OCI-LY7 (cell line): ENCODE measurements at regions of chr4 and their contacts with region 1.

Region 1: DNA sequence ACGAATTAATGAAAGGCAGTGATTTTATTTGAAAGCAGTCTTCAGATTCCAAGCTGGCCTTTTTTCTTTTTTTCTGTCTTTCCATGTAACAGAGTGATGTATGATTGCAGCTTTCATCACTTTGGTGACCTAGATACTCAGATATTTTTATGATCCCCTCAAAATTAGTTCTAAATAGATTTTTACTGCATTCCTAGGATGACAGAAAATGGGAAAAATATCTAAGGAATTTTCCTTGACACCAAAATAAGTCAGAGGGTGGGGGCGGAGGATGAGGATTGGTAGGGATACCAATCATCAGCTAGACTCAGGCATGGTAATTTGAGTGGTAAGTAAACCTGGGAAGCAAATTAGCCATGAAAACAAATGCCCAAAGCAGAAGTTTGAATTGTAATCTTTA is 11.9 kb upstream of the HMGB2 start:
- DNase-seq: no peak
- H3K4me3 ChIP-seq: no peak overlapping the region
- H3K27ac ChIP-seq: no peak overlapping the region
- H3K4me1 ChIP-seq: peaks cover 5% of the 10 kb centered on the region
- CTCF ChIP-seq: no peak

Region 2: DNA sequence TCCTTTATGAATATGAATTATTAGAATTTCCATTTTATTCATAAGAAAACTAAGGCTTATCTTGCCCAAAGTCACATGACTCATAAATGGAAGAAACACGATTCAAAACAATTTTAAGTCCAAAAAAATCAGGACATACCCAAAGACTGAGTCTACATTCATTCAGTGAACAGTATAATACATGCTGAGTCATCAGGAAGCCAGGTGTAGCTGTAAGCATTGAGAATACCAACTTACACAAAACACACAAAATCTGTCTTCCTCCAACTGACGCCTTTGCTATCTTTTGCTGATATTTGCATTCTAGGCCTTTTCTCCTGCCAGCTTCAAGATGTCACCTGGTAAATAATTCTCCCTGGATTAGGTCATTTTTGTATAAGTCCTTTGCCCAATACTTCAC is 697.6 kb before region 1 on chr4:
- CTCF ChIA-PET with region 1: no interaction called
- POLR2A ChIA-PET with region 1: no interaction called
- intact Hi-C with region 1: no loop called
- DNase-seq: no peak
- H3K4me3 ChIP-seq: no peak overlapping the region
- H3K27ac ChIP-seq: no peak overlapping the region
- H3K4me1 ChIP-seq: no peaks in the 10 kb centered on the region
- CTCF ChIP-seq: no peak

Region 3: DNA sequence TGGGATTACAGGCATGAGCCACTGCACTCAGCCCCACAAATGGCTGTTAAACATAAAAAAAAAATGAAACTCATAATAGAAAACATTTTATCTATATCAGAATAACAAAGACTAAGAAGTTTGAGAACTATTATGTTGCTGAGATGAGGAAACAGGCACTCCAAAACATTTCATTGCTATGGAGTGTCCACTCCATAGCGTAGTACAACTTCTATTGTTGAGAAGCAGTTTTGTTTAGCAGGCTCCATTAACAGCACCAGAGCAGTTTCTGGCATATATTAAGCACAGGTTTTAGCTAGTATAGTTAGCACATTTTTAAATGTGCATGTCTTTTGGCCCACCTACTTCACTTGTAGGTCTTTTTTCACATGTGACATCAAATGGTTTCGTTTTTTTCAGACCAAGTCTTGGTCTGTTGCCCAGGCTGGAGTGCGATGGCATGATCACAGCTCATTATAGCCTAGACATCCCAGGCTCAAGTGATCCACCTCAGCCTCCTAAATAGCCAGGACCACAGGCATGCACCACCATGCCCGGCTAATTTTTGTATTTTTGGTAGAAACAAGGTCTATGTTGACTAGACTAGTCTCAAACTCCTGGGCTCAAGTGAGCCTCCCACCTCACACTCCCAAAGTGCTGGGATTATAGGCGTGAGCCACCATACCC is 17.7 kb before region 1 on chr4:
- CTCF ChIA-PET with region 1: no interaction called
- POLR2A ChIA-PET with region 1: interaction called, 54 read pairs
- intact Hi-C with region 1: no loop called
- DNase-seq: no peak
- H3K4me3 ChIP-seq: no peak overlapping the region
- H3K27ac ChIP-seq: no peak overlapping the region
- H3K4me1 ChIP-seq: peaks cover 26% of the 10 kb centered on the region
- CTCF ChIP-seq: no peak

Region 4: DNA sequence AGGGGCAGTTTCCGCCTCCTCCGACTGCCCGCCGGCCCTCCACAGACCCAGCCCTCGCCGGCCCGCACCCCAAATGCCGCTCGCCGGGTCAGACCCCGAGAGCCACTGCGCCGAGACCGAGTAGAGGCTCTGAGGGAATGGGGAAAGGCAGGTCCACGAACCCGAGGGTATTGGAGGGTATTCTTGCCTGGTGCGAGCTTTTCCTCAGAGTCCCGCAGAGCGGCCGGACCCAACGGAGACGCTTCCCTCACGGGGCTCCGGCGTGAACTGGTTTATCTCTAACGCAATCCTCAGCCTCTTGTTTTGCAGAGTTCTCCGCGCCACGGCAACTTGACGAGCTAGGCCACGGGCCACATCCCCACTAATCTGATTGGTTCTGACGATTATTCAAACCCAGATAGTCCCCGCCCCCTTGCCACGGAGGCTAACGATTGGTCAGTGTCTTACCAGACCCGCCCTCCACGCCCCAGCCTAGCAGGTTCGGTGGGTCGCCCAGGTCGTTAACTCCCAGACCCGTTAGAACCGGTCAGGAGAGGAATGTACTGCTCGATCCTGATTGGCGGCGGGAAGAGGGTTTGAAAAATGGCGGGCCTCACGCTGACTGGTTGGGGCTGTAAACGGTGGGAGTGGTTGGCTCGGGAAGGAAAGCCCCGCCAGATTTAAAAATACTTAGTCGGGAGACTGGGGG is 11.8 kb before region 1 on chr4 and contains the start of gene HMGB2:
- CTCF ChIA-PET with region 1: interaction called, 3 read pairs
- POLR2A ChIA-PET with region 1: interaction called, 54 read pairs
- intact Hi-C with region 1: no loop called
- DNase-seq: peak; percentile 100
- H3K4me3 ChIP-seq: peak within 1 kb of the TSS; percentile 99
- H3K27ac ChIP-seq: peak within 1 kb of the TSS; percentile 92
- H3K4me1 ChIP-seq: peaks cover 49% of the 10 kb centered on the region
- CTCF ChIP-seq: no peak
- total RNA-seq, gene HMGB2: 697 and 1,101 TPM in 2 replicates

Region 5: GRCh38 chr4:173360587-173361221 is 14.6 kb after region 1 on chr4:
- CTCF ChIA-PET with region 1: interaction called, 3 read pairs
- POLR2A ChIA-PET with region 1: interaction called, 336 read pairs
- intact Hi-C with region 1: loop called (anchors 2 kb)
- DNase-seq: peak; percentile 24
- H3K4me3 ChIP-seq: no peak overlapping the region
- H3K27ac ChIP-seq: no peak overlapping the region
- H3K4me1 ChIP-seq: peaks cover 22% of the 10 kb centered on the region
- CTCF ChIP-seq: peak; percentile 75

Region 6: GRCh38 chr4:173370477-173371291 is 24.6 kb after region 1 on chr4 and contains the start of gene SAP30:
- CTCF ChIA-PET with region 1: no interaction called
- POLR2A ChIA-PET with region 1: interaction called, 336 read pairs
- intact Hi-C with region 1: loop called (anchors 2 kb)
- DNase-seq: peak; percentile 98
- H3K4me3 ChIP-seq: peak within 1 kb of the TSS; percentile 83
- H3K27ac ChIP-seq: peak within 1 kb of the TSS; percentile 91
- H3K4me1 ChIP-seq: peaks cover 39% of the 10 kb centered on the region
- CTCF ChIP-seq: no peak
- total RNA-seq, gene SAP30: 63.5 and 86.2 TPM in 2 replicates